Common myeloid progenitor, CD34-positive (primary cell): ENCODE measurements at regions of chr4 and their contacts with region 1.

Region 1: GRCh38 chr4:88021824-88022223 is 14.4 kb downstream of the PKD2 start:
- DNase-seq: no peak
- H3K4me3 ChIP-seq: no peak overlapping the region
- H3K27ac ChIP-seq: no peak overlapping the region
- H3K4me1 ChIP-seq: peaks cover 0 to 9% (median 5%) of the 10 kb centered on the region in 4 experiments
- H3K27me3 ChIP-seq: no peaks in the 10 kb centered on the region

Region 2: DNA sequence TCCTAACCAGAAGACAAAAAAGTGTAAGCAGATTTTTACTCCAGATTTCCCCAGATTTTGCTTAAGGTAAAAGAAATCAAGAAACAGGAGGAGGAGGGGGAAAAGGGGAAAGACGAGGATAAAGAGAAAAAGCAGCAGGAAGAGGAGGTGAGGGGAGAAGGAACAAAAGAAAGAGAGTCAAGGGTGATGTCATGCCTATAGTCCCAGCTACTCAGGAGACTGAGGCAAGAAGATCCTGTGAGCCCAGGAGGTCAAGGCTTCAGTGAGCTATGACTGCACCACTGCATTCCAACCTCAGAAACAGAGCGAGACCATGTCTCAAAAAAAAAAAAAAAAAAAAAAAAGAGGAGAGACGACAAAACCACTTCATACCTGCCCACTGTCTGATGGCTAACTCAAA is 26.4 kb before region 1 on chr4:
- CTCF ChIA-PET with region 1: no interaction called
- POLR2A ChIA-PET with region 1: no interaction called
- DNase-seq: no peak
- H3K4me3 ChIP-seq: no peak overlapping the region
- H3K27ac ChIP-seq: no peak overlapping the region
- H3K4me1 ChIP-seq: no peaks in the 10 kb centered on the region
- H3K27me3 ChIP-seq: no peaks in the 10 kb centered on the region

Region 3: DNA sequence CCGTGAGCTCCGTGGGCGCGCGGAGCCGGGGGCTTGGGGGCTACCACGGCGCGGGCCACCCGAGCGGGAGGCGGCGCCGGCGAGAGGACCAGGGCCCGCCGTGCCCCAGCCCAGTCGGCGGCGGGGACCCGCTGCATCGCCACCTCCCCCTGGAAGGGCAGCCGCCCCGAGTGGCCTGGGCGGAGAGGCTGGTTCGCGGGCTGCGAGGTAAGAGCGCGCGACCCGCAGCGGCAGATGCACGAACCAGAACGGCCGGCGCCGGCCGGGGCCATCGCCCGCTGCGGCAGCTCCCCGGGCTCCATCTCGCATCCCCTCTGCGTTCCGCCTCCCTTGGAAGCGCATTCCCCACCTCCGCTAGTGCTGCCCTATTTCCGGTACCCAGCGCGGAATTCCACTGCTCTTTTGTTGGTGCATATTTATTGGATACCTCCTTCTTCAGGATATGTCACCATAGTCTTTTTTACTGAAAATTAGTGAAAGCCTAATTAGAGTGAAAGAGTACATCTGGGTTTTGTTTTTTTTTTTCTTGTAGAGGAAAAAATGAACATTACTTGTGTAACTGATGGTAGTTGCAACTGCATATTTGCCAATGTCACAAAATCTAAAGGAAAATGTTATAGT is 13.6 kb before region 1 on chr4:
- CTCF ChIA-PET with region 1: interaction called, 17 read pairs
- POLR2A ChIA-PET with region 1: interaction called, 3 read pairs
- DNase-seq: peak in 2 of 3 donors; percentile 34 to 47
- H3K4me3 ChIP-seq: peak overlapping the region; percentile 78 to 93 (median 86)
- H3K27ac ChIP-seq: peak overlapping the region; percentile 62 to 71
- H3K4me1 ChIP-seq: peaks cover 35 to 54% (median 45%) of the 10 kb centered on the region in 4 experiments
- H3K27me3 ChIP-seq: no peaks in the 10 kb centered on the region

Region 4: GRCh38 chr4:88033309-88033708 is 11.5 kb after region 1 on chr4:
- CTCF ChIA-PET with region 1: interaction called, 15 read pairs
- POLR2A ChIA-PET with region 1: no interaction called
- DNase-seq: peak; percentile 76 to 84 (median 80)
- H3K4me3 ChIP-seq: no peak overlapping the region
- H3K27ac ChIP-seq: no peak overlapping the region
- H3K4me1 ChIP-seq: peaks cover 0 to 7% (median 3%) of the 10 kb centered on the region in 4 experiments
- H3K27me3 ChIP-seq: no peaks in the 10 kb centered on the region